Esophagus muscularis mucosa (tissue), 4 donors: ENCODE measurements at regions of chr3 and their contacts with region 1.

Region 1: DNA sequence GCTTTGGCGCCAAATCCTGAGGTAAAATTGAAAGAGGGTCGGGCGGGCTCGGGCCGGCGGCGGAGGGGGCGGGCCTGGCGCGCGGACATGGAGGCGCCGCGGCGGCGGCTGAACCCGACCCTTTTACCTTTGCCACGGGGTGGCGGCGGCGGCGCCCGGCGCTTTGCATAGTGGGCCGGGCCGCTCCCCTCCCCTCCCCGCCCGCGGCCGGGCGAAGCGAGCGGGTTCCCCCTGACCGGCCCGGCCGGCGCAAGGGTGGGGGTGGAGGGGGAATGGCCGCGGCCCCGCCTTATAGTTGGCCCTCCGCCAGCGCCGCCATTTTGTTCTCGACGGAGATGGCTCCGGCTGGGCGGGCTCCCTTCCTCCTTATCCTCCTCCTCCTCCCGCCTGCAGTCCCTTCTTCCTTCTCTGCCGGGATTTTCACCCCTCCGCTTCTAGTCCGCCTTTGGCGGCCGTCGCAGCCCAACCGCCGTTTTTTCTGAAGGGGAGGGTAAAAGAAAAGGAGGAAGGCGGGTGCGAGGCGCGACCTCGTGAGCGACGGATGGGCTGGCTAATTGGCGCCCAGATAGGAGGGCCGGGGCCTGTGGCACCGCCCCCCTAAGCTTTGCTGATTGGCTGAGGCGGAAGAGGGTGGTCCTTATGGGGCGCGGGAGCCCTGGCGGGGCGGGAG is 638 bp downstream of the NR2C2 start:
- DNase-seq: peak; percentile 99
- H3K4me3 ChIP-seq: peak overlapping the region; percentile 82 to 99 (median 92)
- H3K27ac ChIP-seq: peak overlapping the region; percentile 99 to 100 (median 99)
- H3K4me1 ChIP-seq: peaks cover 30 to 75% (median 60%) of the 10 kb centered on the region in 4 donors
- H3K27me3 ChIP-seq: no peaks in the 10 kb centered on the region
- CTCF ChIP-seq: no peak
- EP300 ChIP-seq: no peak
- POLR2A ChIP-seq: no peak

Region 2: DNA sequence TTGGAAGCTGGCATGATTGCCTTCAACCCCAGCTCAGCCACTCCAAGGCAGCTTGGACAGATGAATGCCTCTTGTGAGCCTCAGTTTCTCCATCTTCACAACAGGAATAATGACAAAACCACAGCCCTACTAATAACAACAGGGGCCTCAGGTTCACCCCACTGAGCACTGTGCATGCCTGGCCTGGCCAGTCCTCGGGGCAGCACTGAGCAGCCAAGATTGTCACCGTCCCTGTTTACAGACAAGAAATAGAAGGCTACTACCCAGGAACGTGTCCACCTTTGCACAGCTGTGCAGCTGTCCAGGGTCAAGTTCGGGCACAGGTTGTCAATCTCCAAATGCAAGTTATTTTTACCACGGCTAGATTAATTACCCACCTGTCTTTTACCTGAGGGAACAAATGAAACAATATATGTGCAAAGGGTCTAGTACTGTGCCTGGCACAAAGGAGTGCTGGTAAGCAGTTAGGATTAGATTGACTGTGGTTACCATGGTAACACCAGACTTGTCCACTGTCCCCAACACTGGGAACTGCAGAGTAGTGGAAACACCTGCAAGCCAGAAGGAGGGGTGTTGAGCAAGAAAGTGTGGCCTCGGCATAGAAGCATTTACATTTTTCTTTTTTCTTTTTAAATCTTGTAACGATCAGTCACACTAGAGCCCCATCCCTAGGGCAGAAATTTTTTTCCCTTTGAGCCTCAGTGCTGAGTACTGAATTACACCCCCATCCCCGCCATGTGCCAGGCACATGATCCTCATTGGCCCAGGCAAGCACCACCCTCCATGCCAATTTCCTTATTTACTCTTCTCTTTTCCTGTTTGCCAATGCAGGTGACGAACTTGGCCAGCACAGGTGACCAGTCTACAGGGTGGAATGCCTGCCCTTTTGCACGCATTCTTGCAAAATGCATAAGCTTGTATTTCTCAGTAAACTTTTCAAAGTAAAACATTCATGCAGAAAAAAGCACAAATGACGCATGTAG is 612.0 kb before region 1 on chr3:
- intact Hi-C with region 1: no loop called
- DNase-seq: no peak
- H3K4me3 ChIP-seq: no peak overlapping the region
- H3K27ac ChIP-seq: no peak overlapping the region
- H3K4me1 ChIP-seq: no peaks in the 10 kb centered on the region
- H3K27me3 ChIP-seq: peaks cover 0 to 3% (median 0%) of the 10 kb centered on the region in 4 donors
- CTCF ChIP-seq: no peak
- EP300 ChIP-seq: no peak
- POLR2A ChIP-seq: no peak

Region 3: DNA sequence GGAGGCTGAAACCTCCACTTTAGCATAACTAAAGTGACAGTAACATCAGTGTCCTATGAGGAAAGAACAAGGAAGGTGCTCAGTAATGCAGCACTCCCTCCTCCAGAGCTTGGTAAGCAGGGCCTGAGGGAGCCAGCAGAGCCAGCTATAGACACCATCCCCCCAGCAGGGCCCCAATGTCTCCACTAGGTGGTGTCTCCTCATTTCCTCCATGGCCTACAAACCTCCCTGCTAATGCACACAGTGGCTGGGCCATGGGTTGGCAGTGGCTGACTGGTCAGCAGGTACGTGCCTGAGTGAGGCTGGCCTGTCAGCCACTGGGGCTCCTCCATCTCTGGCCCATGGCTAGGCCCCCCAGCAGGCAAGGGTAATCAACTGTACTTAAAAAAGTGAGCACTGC is 103.5 kb after region 1 on chr3:
- intact Hi-C with region 1: loop called (anchors 10 kb)
- DNase-seq: no peak
- H3K4me3 ChIP-seq: no peak overlapping the region
- H3K27ac ChIP-seq: no peak overlapping the region
- H3K4me1 ChIP-seq: peaks cover 0 to 8% (median 0%) of the 10 kb centered on the region in 4 donors
- H3K27me3 ChIP-seq: no peaks in the 10 kb centered on the region
- CTCF ChIP-seq: peak in 2 of 3 experiments; percentile 14 to 56
- EP300 ChIP-seq: no peak
- POLR2A ChIP-seq: no peak